ENCODE measurements at regions of chr6 and their contacts with region 1.

Region 1: DNA sequence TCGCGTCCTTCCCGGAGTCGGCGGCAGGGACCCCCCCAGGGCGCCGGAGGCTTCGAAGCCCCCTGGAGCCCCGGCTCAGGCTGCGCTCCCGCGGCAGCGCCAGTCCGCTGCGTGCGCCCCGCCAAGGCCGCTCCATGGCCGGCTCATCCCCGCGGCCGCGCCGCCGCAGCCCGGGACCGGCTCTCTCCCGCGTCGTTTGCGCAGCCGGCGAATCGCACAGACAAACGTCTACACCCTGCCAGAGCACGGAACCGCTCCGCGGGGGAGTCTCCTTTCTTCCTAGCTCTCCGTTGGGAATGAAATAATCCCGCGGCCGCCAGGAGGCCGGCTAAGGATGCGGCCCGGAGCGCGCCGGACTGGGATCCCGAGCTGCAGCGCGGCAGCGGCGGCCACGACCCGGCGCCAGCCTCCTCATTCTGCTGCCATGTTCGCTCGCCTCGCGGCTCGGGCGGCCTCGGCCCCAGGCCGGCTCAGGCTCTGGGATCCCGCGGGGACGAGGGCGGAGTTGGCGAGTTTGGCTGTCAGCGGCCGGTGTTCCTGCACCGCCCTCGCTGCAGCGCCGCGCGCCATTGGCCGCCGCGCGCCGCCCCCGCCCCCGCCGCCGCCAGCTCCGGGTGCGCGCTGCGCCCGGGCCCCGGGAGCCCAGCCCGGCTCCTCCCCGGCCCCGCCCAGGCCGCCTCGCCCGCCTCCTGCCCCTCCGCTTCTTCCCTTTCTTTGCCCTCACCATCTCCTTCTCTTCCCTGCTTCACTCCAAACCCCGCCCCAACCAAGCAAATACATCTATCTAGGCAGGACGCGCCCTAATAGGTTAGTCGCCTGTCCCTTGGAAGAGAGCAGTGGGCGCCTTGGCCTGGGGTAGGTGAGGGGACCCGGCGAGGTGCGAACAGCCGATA is at the start of gene GFOD1:
- DNase-seq: peak; percentile 78
- ATAC-seq: peak; percentile 94
- H3K4me3 ChIP-seq: peak within 1 kb of the TSS; percentile 70
- H3K27ac ChIP-seq: peak within 1 kb of the TSS; percentile 63
- H3K4me1 ChIP-seq: peaks cover 5% of the 10 kb centered on the region; the same call in 1 of the 2 replicates
- H3K27me3 ChIP-seq: no peaks in the 10 kb centered on the region
- CTCF ChIP-seq: peak; percentile 24; the same call in 1 of the 2 replicates
- POLR2A ChIP-seq: peak; percentile 53; the same call in 1 of the 2 replicates
- RAD21 ChIP-seq: no peak; the same call in 1 of the 2 replicates
- total RNA-seq, gene GFOD1: 3.4 and 3.6 TPM in 2 replicates

Region 2: GRCh38 chr6:13355043-13355951 is 132.1 kb before region 1 on chr6:
- CTCF ChIA-PET with region 1: no interaction called
- POLR2A ChIA-PET with region 1: no interaction called
- dilution Hi-C with region 1: no loop called
- in situ Hi-C with region 1: no loop called
- intact Hi-C with region 1: loop called (anchors 2 kb)
- DNase-seq: peak; percentile 99
- ATAC-seq: peak; percentile 87
- H3K4me3 ChIP-seq: no peak overlapping the region
- H3K27ac ChIP-seq: peak overlapping the region; percentile 94
- H3K4me1 ChIP-seq: peaks cover 23% of the 10 kb centered on the region
- H3K27me3 ChIP-seq: no peaks in the 10 kb centered on the region
- CTCF ChIP-seq: no peak
- POLR2A ChIP-seq: no peak
- RAD21 ChIP-seq: no peak

Region 3: DNA sequence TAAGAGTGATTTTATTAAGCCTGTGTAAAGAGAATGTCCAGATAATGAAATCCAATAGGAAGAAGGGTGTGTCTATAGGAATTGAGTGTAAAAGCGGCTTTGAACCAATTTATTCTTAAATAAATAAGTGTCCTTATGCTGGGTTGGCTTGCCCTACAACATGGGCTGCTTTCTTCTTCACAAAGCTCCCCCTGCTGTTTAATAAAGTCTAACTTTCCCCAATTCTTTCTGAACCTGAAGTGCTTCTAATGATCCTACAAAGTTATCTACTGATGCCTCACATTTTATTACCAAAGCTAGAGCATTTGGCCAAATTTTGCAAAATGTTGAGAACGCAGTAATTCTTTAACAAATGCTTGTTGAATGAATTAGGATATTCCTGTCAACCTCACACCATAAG is 50.7 kb after region 1 on chr6:
- CTCF ChIA-PET with region 1: interaction called, 4 read pairs
- POLR2A ChIA-PET with region 1: no interaction called
- dilution Hi-C with region 1: no loop called
- in situ Hi-C with region 1: no loop called
- intact Hi-C with region 1: loop called (anchors 2 kb)
- DNase-seq: peak; percentile 61
- ATAC-seq: peak; percentile 60
- H3K4me3 ChIP-seq: no peak overlapping the region
- H3K27ac ChIP-seq: no peak overlapping the region
- H3K4me1 ChIP-seq: no peaks in the 10 kb centered on the region
- H3K27me3 ChIP-seq: peaks cover 9% of the 10 kb centered on the region
- CTCF ChIP-seq: peak; percentile 57
- POLR2A ChIP-seq: no peak
- RAD21 ChIP-seq: peak; percentile 66

Region 4: DNA sequence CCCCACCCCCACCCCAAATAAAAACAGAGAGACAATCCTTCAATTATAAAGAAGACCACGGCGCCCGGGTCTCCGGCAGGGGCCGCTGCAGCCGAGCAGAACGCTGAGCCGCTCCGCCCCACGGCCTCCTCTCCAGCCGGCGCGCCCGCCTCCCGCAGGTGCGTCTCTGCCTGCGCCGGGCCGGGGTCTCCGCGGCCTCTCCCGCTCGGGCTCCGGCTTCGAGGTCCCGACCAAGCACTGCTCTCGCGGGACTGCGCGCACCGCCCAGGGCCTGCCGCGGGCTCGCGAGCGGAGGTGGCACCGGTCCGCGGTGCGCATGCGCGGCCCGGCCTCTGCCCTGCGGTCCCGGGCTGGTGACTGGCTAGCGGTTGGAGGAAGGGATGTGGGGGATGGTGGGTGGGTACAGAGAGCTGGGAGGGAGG is 86.8 kb after region 1 on chr6:
- CTCF ChIA-PET with region 1: interaction called, 4 read pairs
- POLR2A ChIA-PET with region 1: no interaction called
- dilution Hi-C with region 1: no loop called
- in situ Hi-C with region 1: no loop called
- intact Hi-C with region 1: loop called (anchors 2 kb)
- DNase-seq: peak; percentile 90
- ATAC-seq: peak; percentile 91
- H3K4me3 ChIP-seq: peak overlapping the region; percentile 76
- H3K27ac ChIP-seq: peak overlapping the region; percentile 69; the same call in 1 of the 2 replicates
- H3K4me1 ChIP-seq: no peaks in the 10 kb centered on the region; the same call in 1 of the 2 replicates
- H3K27me3 ChIP-seq: peaks cover 6% of the 10 kb centered on the region; the same call in 1 of the 2 replicates
- CTCF ChIP-seq: peak; percentile 49
- POLR2A ChIP-seq: peak; percentile 81
- RAD21 ChIP-seq: peak; percentile 41; the same call in 1 of the 2 replicates